ENCODE measurements at regions of chr1 and their contacts with region 1.

Region 1: GRCh38 chr1:202599677-202600431 is 110.4 kb downstream of the SYT2 start:
- DNase-seq: no peak
- H3K4me3 ChIP-seq: no peak overlapping the region
- H3K27ac ChIP-seq: no peak overlapping the region
- H3K4me1 ChIP-seq: no peaks in the 10 kb centered on the region
- H3K27me3 ChIP-seq: no peaks in the 10 kb centered on the region
- CTCF ChIP-seq: peak in 2 of 3 experiments; percentile 39 to 71
- POLR2A ChIP-seq: no peak

Region 2: DNA sequence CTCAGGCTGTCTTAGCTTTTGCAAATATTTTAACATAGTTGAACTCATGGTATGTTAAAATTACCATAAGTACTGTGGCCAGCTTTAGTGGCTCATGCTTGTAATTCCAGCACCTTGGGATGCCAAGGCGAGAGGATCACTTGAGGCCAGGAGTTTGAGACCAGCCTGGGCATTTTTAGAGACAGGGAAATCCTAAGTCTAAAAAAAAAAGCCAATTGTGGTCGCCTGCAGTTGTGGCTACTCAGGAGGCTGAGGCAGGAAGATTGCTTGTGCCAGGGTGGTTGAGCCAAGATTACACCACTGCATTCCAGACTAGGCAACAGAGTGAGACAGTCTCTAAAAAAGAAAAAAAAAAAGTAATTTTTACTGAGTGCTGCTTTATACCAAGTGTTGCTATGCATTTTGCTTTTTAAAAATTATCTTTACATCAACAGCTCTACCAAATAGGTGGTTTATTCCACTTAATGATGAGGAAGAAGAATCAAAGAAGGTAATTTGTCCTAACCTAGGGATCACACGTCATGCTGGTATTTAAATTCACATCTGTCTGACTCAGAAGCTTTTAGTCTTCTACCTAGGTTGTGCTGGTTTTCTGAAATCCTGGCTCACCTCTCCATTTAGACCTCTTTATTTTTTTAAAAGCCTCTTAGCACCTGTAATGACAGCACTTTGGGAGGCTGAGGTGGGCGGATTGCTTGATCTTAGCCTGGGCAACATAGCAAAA is 234.6 kb before region 1 on chr1:
- intact Hi-C with region 1: loop called (anchors 10 kb)
- DNase-seq: no peak
- H3K4me3 ChIP-seq: no peak overlapping the region
- H3K27ac ChIP-seq: no peak overlapping the region
- H3K4me1 ChIP-seq: no peaks in the 10 kb centered on the region
- H3K27me3 ChIP-seq: no peaks in the 10 kb centered on the region
- CTCF ChIP-seq: no peak
- POLR2A ChIP-seq: no peak

Region 3: GRCh38 chr1:202501281-202501680 is 98.6 kb before region 1 on chr1:
- intact Hi-C with region 1: loop called (anchors 10 kb)
- DNase-seq: no peak
- H3K4me3 ChIP-seq: no peak overlapping the region
- H3K27ac ChIP-seq: no peak overlapping the region
- H3K4me1 ChIP-seq: peaks cover 14% of the 10 kb centered on the region
- H3K27me3 ChIP-seq: no peaks in the 10 kb centered on the region
- CTCF ChIP-seq: peak; percentile 23 to 53 (median 37)
- POLR2A ChIP-seq: no peak

Region 4: DNA sequence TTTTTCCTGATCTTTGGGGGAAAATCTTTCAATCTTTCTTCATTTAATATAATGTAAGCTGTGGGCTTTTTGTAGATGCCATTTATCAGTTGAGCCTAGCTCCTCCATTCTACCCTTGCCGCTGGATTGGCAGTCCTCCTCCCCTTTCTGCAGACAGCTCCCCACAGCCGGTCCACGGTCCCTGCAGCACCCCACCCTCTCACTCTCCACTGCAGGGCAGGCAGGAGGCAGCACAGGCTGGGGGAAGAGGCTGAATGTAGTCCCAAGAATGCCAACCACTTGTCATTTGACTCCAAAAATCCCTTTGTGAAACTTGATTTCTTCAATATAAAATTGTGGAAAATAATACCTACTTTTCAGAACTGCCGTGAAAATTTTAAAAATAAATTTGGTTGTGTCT is 13.7 kb after region 1 on chr1:
- intact Hi-C with region 1: no loop called
- DNase-seq: no peak
- H3K4me3 ChIP-seq: no peak overlapping the region
- H3K27ac ChIP-seq: no peak overlapping the region
- H3K4me1 ChIP-seq: peaks cover 15% of the 10 kb centered on the region
- H3K27me3 ChIP-seq: no peaks in the 10 kb centered on the region
- CTCF ChIP-seq: no peak
- POLR2A ChIP-seq: no peak